ENCODE measurements at regions of chr6 and their contacts with region 1.

Region 1: GRCh38 chr6:31795616-31796298 is at the start of gene VARS1:
- DNase-seq: peak; percentile 62
- H3K4me3 ChIP-seq: peak within 1 kb of the TSS; percentile 84
- H3K27ac ChIP-seq: peak within 1 kb of the TSS; percentile 77
- H3K27me3 ChIP-seq: no peaks in the 10 kb centered on the region
- CTCF ChIP-seq: peak; percentile 72
- polyA plus RNA-seq, gene VARS1: 16.0 and 23.9 TPM in 2 replicates

Region 2: GRCh38 chr6:31474871-31475286 is 320.9 kb before region 1 on chr6:
- CTCF ChIA-PET with region 1: no interaction called
- POLR2A ChIA-PET with region 1: no interaction called
- DNase-seq: no peak
- H3K4me3 ChIP-seq: no peak overlapping the region
- H3K27ac ChIP-seq: no peak overlapping the region
- H3K27me3 ChIP-seq: peaks cover 22% of the 10 kb centered on the region
- CTCF ChIP-seq: peak; percentile 28; the same call in 1 of the 2 replicates

Region 3: DNA sequence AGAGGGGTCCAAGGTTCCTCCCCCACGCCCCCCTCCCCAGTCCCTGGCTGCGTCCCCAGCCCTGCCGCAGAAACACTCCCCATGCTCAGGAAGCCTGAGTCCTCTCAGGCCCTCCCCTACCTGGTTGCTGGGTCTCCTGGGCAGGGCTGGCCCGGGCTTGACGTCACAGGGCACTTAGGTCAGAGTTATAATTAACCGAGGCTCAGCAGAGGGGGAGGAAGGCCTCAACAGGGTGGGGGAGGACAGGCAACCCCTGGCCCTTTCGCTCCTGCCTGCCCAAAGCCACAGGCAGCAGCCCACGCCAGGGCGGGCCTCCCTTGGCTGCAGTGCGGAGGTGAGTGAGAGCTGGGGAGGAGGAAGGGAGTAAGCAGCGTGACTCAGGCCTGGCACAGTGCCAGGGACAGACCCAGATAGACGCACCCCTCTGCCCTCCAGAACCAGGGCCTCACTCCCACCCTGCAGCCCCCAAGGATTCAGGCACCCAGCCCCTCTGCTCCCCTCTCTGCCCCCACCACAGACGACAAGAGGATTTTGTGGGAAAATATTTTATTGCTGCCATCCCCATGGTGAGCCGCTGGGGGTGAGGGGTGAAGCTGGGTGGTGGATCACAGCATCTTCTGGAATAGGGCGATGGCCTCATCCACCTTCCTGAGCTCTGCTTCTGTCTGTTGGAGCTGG is 18.6 kb before region 1 on chr6 and contains the start of gene VWA7:
- CTCF ChIA-PET with region 1: interaction called, 24 read pairs
- POLR2A ChIA-PET with region 1: no interaction called
- DNase-seq: no peak
- H3K4me3 ChIP-seq: no peak within 1 kb of the TSS
- H3K27ac ChIP-seq: peak within 1 kb of the TSS; percentile 21
- H3K27me3 ChIP-seq: no peaks in the 10 kb centered on the region
- CTCF ChIP-seq: no peak
- polyA plus RNA-seq, gene VWA7: 0.10 and 0.32 TPM in 2 replicates

Region 4: GRCh38 chr6:31806465-31807272 is 10.9 kb after region 1 on chr6 and contains the start of gene LSM2:
- CTCF ChIA-PET with region 1: interaction called, 25 read pairs
- POLR2A ChIA-PET with region 1: interaction called, 10 read pairs
- DNase-seq: peak; percentile 93
- H3K4me3 ChIP-seq: peak within 1 kb of the TSS; percentile 78
- H3K27ac ChIP-seq: peak within 1 kb of the TSS; percentile 70
- H3K27me3 ChIP-seq: no peaks in the 10 kb centered on the region
- CTCF ChIP-seq: peak; percentile 18
- polyA plus RNA-seq, gene LSM2: 34.2 and 38.3 TPM in 2 replicates

Measured in AG04450 (cell line).